ENCODE measurements at regions of chr15 and their contacts with region 1.

Region 1: GRCh38 chr15:34318277-34319079 is 19.1 kb downstream of the SLC12A6 start:
- DNase-seq: peak; percentile 63
- ATAC-seq: peak; percentile 95
- H3K4me3 ChIP-seq: peak overlapping the region; percentile 65
- H3K27ac ChIP-seq: peak overlapping the region; percentile 12; the same call in 1 of the 2 replicates
- H3K4me1 ChIP-seq: peaks cover 18% of the 10 kb centered on the region
- H3K27me3 ChIP-seq: no peaks in the 10 kb centered on the region
- CTCF ChIP-seq: no peak

Region 2: GRCh38 chr15:34188711-34189110 is 129.8 kb before region 1 on chr15:
- CTCF ChIA-PET with region 1: no interaction called
- POLR2A ChIA-PET with region 1: no interaction called
- intact Hi-C with region 1: no loop called
- DNase-seq: no peak
- ATAC-seq: no peak
- H3K4me3 ChIP-seq: no peak overlapping the region
- H3K27ac ChIP-seq: no peak overlapping the region
- H3K4me1 ChIP-seq: no peaks in the 10 kb centered on the region
- H3K27me3 ChIP-seq: no peaks in the 10 kb centered on the region
- CTCF ChIP-seq: no peak

Region 3: GRCh38 chr15:34297059-34297458 is 21.4 kb before region 1 on chr15:
- CTCF ChIA-PET with region 1: no interaction called
- POLR2A ChIA-PET with region 1: no interaction called
- intact Hi-C with region 1: loop called (anchors 2 kb)
- DNase-seq: peak; percentile 62
- ATAC-seq: peak; percentile 88
- H3K4me3 ChIP-seq: no peak overlapping the region
- H3K27ac ChIP-seq: peak overlapping the region; percentile 81
- H3K4me1 ChIP-seq: peaks cover 30% of the 10 kb centered on the region
- H3K27me3 ChIP-seq: no peaks in the 10 kb centered on the region
- CTCF ChIP-seq: no peak

Region 4: GRCh38 chr15:34337557-34338306 is 19.3 kb after region 1 on chr15 and contains the start of gene SLC12A6:
- CTCF ChIA-PET with region 1: no interaction called
- POLR2A ChIA-PET with region 1: interaction called, 10 read pairs
- intact Hi-C with region 1: no loop called
- DNase-seq: peak; percentile 95
- ATAC-seq: peak; percentile 82
- H3K4me3 ChIP-seq: peak within 1 kb of the TSS; percentile 90
- H3K27ac ChIP-seq: peak within 1 kb of the TSS; percentile 93
- H3K4me1 ChIP-seq: peaks cover 68% of the 10 kb centered on the region
- H3K27me3 ChIP-seq: no peaks in the 10 kb centered on the region
- CTCF ChIP-seq: no peak
- total RNA-seq, gene SLC12A6: 22.9 TPM in 2 replicates

Measured in PC-3 (cell line).